HEK293T (cell line): ENCODE measurements at regions of chr17 and their contacts with region 1.

Region 1: GRCh38 chr17:40121181-40122135 is at the start of gene MSL1:
- DNase-seq: peak; percentile 74

Region 2: GRCh38 chr17:39951924-39952679 is 169.4 kb before region 1 on chr17:
- CTCF ChIA-PET with region 1: no interaction called
- POLR2A ChIA-PET with region 1: no interaction called
- DNase-seq: no peak

Region 3: DNA sequence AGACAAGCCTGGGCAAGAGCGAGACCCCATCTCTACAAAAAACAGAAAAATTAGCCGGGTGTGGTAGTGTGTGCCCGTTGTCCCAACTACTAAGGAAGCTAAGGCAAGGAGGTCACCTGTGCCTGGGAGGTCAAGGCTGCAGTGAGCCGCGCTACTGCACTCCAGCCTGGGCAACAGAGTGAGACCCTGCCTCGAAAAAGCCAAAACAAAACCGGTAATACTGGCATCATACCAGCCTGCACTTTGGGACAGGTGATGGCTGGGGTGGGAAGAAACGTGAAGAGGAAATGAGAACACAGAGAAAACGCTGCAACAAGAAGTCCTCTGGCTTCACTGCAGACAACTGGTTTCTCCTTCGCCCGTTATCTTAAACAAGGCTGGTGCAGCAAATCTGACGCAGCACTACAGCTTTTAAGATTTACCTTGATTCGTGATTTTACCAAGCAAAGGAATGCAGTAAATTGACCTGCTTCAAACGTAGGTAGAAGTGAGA is 18.2 kb after region 1 on chr17:
- CTCF ChIA-PET with region 1: interaction called, 3 read pairs
- POLR2A ChIA-PET with region 1: interaction called, 135 read pairs
- DNase-seq: no peak

Region 4: DNA sequence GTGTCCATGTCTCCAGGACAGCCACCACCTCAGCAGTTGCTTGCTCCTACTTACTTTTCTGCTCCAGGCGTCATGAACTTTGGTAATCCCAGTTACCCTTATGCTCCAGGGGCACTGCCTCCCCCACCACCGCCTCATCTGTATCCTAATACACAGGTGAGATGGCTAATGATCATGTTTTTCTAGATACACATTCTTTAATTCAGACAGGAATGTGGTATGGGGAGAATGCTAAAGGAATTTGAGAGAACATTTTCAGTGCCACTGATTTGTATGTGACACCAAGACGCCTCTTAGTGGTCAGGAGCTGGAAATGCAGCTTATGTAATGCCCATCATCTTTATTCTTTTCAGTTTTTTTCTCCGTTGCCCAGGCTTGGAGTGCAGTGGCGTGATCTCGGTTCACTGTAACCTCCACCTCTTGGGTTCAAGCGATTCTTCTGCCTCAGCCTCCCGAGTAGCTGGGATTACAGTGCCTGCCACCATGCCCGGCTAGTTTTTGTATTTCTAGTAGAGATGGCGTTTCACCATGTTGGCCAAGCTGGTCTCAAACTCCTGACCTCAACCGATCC is 46.9 kb after region 1 on chr17:
- CTCF ChIA-PET with region 1: interaction called, 6 read pairs
- POLR2A ChIA-PET with region 1: interaction called, 10 read pairs
- DNase-seq: peak; percentile 46

Region 5: GRCh38 chr17:40191237-40192208 is 70.1 kb after region 1 on chr17:
- CTCF ChIA-PET with region 1: no interaction called
- POLR2A ChIA-PET with region 1: no interaction called
- DNase-seq: peak; percentile 57

Region 6: GRCh38 chr17:40209404-40210093 is 88.1 kb after region 1 on chr17:
- CTCF ChIA-PET with region 1: no interaction called
- POLR2A ChIA-PET with region 1: no interaction called
- DNase-seq: no peak